Activated CD4-positive, alpha-beta T cell treated with anti-CD3 and anti-CD28 coated beads, Interleukin-2, amount 10 ng/mL, durations not matched to agents 24 days and 14 days (primary cell): ENCODE measurements at regions of chrX and their contacts with region 1.

Region 1: GRCh38 chrX:19625612-19626011 is 110.3 kb upstream of the MAP3K15 start:
- DNase-seq: peak; percentile 82
- H3K4me3 Mint-ChIP-seq: peak overlapping the region; percentile 64
- H3K27ac Mint-ChIP-seq: peak overlapping the region; percentile 85
- H3K4me1 Mint-ChIP-seq: peaks cover 48% of the 10 kb centered on the region
- H3K27me3 Mint-ChIP-seq: no peaks in the 10 kb centered on the region

Region 2: GRCh38 chrX:19593690-19594089 is 31.9 kb before region 1 on chrX:
- intact Hi-C with region 1: loop called (anchors 5 kb)
- DNase-seq: peak; percentile 76
- H3K4me3 Mint-ChIP-seq: no peak overlapping the region
- H3K27ac Mint-ChIP-seq: no peak overlapping the region
- H3K4me1 Mint-ChIP-seq: peaks cover 9% of the 10 kb centered on the region
- H3K27me3 Mint-ChIP-seq: no peaks in the 10 kb centered on the region

Region 3: GRCh38 chrX:19642241-19643109 is 16.9 kb after region 1 on chrX:
- intact Hi-C with region 1: loop called (anchors 2 kb)
- DNase-seq: no peak
- H3K4me3 Mint-ChIP-seq: peak overlapping the region; percentile 50
- H3K27ac Mint-ChIP-seq: peak overlapping the region; percentile 76
- H3K4me1 Mint-ChIP-seq: peaks cover 13% of the 10 kb centered on the region
- H3K27me3 Mint-ChIP-seq: no peaks in the 10 kb centered on the region